ENCODE measurements at regions of chr2 and their contacts with region 1.

Region 1: DNA sequence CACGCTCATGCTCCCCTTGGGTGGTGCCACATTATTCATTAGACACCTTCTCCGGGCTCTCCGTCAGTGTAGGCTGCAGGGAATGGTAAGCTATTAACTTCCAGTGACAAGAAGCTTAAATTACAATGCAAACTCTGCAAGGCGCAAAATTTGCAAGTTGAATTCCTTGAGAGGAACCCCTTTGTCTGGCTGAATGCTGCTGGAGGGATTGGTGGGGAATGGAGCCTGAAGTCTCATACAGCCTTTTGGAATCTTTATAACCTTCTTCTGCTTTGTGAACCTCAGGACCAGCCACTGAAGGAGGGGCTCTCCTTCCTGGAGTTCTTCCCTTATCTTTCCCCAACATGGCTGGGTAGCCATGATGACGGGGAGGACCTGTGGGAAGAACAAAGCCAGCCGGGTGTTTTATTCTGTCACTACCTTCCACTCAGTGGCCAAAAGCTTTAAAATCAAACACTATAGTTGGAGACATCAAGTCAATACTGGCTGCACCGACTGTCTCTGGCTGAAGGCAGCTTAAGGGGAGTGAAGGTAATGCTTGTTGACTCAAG is 220.9 kb upstream of the EPHA4 start:
- DNase-seq: peak; percentile 74 to 87
- H3K4me3 ChIP-seq: no peak overlapping the region
- H3K4me3 Mint-ChIP-seq: peak overlapping the region; percentile 20
- H3K27ac Mint-ChIP-seq: peak overlapping the region; percentile 86
- H3K4me1 ChIP-seq: peaks cover 57% of the 10 kb centered on the region
- H3K4me1 Mint-ChIP-seq: peaks cover 39% of the 10 kb centered on the region
- H3K27me3 ChIP-seq: no peaks in the 10 kb centered on the region
- H3K27me3 Mint-ChIP-seq: no peaks in the 10 kb centered on the region
- CTCF ChIP-seq: no peak

Region 2: GRCh38 chr2:221588306-221588985 is 204.6 kb before region 1 on chr2:
- CTCF ChIA-PET with region 1: interaction called, 4 read pairs
- POLR2A ChIA-PET with region 1: no interaction called
- intact Hi-C with region 1: loop called (anchors 2 kb)
- DNase-seq: no peak
- H3K4me3 ChIP-seq: no peak overlapping the region
- H3K4me3 Mint-ChIP-seq: peak overlapping the region; percentile 13
- H3K27ac Mint-ChIP-seq: peak overlapping the region; percentile 80
- H3K4me1 ChIP-seq: peaks cover 50% of the 10 kb centered on the region
- H3K4me1 Mint-ChIP-seq: peaks cover 38% of the 10 kb centered on the region
- H3K27me3 ChIP-seq: no peaks in the 10 kb centered on the region
- H3K27me3 Mint-ChIP-seq: no peaks in the 10 kb centered on the region
- CTCF ChIP-seq: no peak

Region 3: DNA sequence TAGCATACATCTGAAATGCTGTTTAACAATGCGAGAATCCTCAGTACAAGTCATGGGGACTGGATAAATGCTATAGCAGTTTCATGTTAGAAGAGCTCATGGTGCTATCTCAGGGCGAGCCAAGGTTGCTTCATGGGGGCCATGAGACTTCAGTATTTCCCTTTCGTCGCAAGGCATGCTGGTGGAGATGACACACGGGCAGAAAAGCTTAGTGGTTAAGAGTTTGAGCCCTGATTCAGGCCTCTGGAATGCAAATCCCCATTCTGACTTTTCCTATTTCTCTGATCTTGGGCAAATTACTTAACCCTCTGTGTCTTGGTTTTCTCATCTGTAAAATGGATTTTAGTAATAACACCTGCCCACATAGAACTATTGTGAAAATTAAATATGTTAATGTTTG is 163.6 kb before region 1 on chr2:
- CTCF ChIA-PET with region 1: no interaction called
- POLR2A ChIA-PET with region 1: no interaction called
- intact Hi-C with region 1: no loop called
- DNase-seq: peak; percentile 23 to 57
- H3K4me3 ChIP-seq: no peak overlapping the region
- H3K4me3 Mint-ChIP-seq: no peak overlapping the region
- H3K27ac Mint-ChIP-seq: no peak overlapping the region
- H3K4me1 ChIP-seq: peaks cover 22% of the 10 kb centered on the region
- H3K4me1 Mint-ChIP-seq: peaks cover 24% of the 10 kb centered on the region
- H3K27me3 ChIP-seq: no peaks in the 10 kb centered on the region
- H3K27me3 Mint-ChIP-seq: no peaks in the 10 kb centered on the region
- CTCF ChIP-seq: no peak

Region 4: DNA sequence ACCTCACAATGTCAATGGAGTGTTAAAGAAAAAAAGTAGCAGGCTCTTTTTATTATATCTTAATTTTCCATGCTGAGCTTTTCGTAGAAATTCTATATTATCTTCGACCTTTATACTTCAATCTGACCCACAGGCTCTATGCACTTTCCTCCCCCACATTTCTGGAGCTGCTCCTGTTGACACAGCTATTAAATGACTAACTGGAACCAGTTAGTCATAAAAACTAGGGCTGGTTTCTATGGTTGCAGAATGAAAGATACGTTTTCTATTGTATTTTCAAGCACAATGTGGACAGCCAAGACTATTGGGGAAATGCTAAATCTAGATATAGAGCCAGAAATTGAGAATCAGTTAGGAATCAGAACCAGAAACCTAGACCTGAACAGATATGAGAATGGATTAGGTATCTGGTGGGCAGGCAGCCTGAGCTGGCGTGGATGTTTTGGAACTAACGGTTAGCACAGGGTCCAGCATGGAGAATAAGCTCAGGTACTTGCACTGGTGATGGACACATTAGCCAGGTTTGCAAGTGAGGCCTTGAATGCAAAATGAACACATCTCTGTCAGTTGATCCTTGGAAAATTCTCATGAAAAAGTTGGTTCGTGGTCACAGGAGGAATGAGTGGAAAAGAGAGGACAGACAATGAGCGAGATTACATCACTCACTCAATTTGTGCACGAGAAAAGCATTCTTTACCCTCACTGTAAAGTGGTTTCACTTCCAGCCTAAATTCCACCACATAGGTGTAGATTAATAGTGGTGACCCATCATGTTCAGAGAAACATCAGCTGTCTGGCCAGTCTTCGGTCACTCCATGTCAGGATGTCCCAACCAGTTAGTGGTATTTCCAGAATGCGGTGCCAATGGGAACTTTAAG is 76.4 kb before region 1 on chr2:
- CTCF ChIA-PET with region 1: no interaction called
- POLR2A ChIA-PET with region 1: no interaction called
- intact Hi-C with region 1: loop called (anchors 1 kb)
- DNase-seq: peak; percentile 71 to 82
- H3K4me3 ChIP-seq: no peak overlapping the region
- H3K4me3 Mint-ChIP-seq: peak overlapping the region; percentile 57
- H3K27ac Mint-ChIP-seq: peak overlapping the region; percentile 93
- H3K4me1 ChIP-seq: peaks cover 47% of the 10 kb centered on the region
- H3K4me1 Mint-ChIP-seq: peaks cover 55% of the 10 kb centered on the region
- H3K27me3 ChIP-seq: no peaks in the 10 kb centered on the region
- H3K27me3 Mint-ChIP-seq: no peaks in the 10 kb centered on the region
- CTCF ChIP-seq: no peak

Region 5: DNA sequence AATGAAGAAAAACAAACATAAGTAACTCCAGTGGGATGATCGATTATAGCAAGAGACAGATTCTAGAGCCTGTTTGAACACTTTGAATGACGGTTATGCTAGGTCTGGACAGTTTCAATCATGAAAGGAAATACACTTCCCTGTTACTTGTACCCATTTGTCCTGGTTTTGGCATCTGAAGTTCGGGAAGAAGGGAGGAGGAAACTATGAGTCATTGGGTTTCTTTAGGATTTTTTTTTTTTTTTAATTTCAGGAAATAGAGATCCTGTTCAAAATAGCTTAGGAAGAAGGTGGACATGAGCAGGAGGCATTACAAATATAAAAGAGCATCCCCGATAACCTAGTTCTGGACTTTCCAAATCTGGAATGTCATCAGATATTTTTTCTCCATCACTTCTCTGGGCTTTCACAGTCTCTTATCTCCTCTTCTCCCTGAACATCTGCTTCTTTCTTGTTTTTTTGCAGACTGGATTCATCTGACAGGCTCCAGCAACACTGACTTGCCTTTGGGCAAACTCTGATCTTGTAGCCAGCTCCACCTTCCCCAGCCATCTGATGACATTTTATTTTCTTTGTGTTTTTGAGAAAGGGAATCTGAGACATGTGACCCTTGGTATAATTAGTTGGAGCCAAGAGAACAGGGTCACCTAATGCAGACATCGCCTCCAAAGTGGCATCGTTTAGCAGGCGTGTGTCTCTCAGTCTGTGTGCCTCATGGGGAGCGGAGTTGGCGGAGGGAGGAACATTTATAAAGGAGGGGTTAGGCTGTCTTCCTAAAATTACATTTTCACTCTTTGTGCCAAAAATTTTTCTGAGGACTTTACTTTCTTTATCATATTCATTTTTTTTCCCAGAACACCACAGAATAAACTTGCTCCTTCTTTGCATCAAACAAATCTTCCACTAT is 25.7 kb before region 1 on chr2:
- CTCF ChIA-PET with region 1: no interaction called
- POLR2A ChIA-PET with region 1: no interaction called
- intact Hi-C with region 1: loop called (anchors 2 kb)
- DNase-seq: no peak
- H3K4me3 ChIP-seq: no peak overlapping the region
- H3K4me3 Mint-ChIP-seq: no peak overlapping the region
- H3K27ac Mint-ChIP-seq: no peak overlapping the region
- H3K4me1 ChIP-seq: peaks cover 10% of the 10 kb centered on the region
- H3K4me1 Mint-ChIP-seq: peaks cover 12% of the 10 kb centered on the region
- H3K27me3 ChIP-seq: no peaks in the 10 kb centered on the region
- H3K27me3 Mint-ChIP-seq: no peaks in the 10 kb centered on the region
- CTCF ChIP-seq: no peak

Region 6: GRCh38 chr2:221818616-221819320 is 25.7 kb after region 1 on chr2:
- CTCF ChIA-PET with region 1: interaction called, 3 read pairs
- POLR2A ChIA-PET with region 1: no interaction called
- intact Hi-C with region 1: loop called (anchors 1 kb)
- DNase-seq: no peak
- H3K4me3 ChIP-seq: no peak overlapping the region
- H3K4me3 Mint-ChIP-seq: no peak overlapping the region
- H3K27ac Mint-ChIP-seq: no peak overlapping the region
- H3K4me1 ChIP-seq: peaks cover 12% of the 10 kb centered on the region
- H3K4me1 Mint-ChIP-seq: peaks cover 17% of the 10 kb centered on the region
- H3K27me3 ChIP-seq: no peaks in the 10 kb centered on the region
- H3K27me3 Mint-ChIP-seq: no peaks in the 10 kb centered on the region
- CTCF ChIP-seq: no peak

Region 7: DNA sequence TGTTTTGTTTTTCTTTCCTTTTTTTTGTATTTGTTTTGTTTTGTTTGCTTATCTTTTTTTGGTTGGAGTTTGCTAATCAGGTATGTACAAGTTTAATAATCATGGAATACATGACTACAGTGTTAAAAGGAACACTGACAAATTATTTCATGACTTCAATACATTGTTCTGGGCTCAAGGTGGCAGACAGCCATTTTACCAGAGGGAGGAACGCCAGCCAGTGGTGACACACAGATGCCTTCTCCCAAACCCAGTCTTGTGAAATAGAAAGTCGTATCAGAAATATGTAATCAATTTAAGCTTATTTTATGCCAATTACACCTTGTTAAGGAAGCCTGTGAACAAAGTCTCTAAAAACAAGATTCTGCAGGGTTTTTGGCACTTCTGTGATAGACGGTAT is 43.0 kb after region 1 on chr2:
- CTCF ChIA-PET with region 1: no interaction called
- POLR2A ChIA-PET with region 1: no interaction called
- intact Hi-C with region 1: no loop called
- DNase-seq: no peak
- H3K4me3 ChIP-seq: no peak overlapping the region
- H3K4me3 Mint-ChIP-seq: no peak overlapping the region
- H3K27ac Mint-ChIP-seq: peak overlapping the region; percentile 68
- H3K4me1 ChIP-seq: no peaks in the 10 kb centered on the region
- H3K4me1 Mint-ChIP-seq: peaks cover 17% of the 10 kb centered on the region
- H3K27me3 ChIP-seq: no peaks in the 10 kb centered on the region
- H3K27me3 Mint-ChIP-seq: no peaks in the 10 kb centered on the region
- CTCF ChIP-seq: no peak

Region 8: DNA sequence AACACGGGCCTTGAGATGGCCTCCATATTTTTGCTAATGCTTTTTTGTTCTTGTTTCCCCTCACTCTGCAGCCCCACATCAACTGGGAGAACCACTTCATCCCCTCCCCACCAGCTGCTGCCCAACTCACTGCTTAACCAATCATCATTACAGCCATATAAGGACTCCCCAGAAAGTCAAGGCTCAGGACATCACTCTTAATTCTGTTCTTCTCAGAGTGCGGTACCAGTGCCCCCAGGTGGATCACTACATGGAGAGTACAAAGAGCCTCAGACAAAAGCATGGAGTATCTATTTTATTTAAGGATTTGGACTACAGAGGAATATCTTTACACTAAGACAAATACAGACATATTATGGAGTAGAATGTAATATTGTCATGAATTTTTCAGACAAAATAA is 165.2 kb after region 1 on chr2:
- CTCF ChIA-PET with region 1: no interaction called
- POLR2A ChIA-PET with region 1: no interaction called
- intact Hi-C with region 1: loop called (anchors 5 kb)
- DNase-seq: peak; percentile 49 to 52
- H3K4me3 ChIP-seq: no peak overlapping the region
- H3K4me3 Mint-ChIP-seq: no peak overlapping the region
- H3K27ac Mint-ChIP-seq: no peak overlapping the region
- H3K4me1 ChIP-seq: no peaks in the 10 kb centered on the region
- H3K4me1 Mint-ChIP-seq: no peaks in the 10 kb centered on the region
- H3K27me3 ChIP-seq: no peaks in the 10 kb centered on the region
- H3K27me3 Mint-ChIP-seq: no peaks in the 10 kb centered on the region
- CTCF ChIP-seq: peak; percentile 29 to 36

Measured in Caco-2 (cell line).